Heart left ventricle (tissue), 16 donors: ENCODE measurements at regions of chr2 and their contacts with region 1.

Region 1: GRCh38 chr2:218186355-218186766 is 19.6 kb upstream of the CXCR1 start:
- DNase-seq: peak in 4 of 5 donors; percentile 46 to 66 (median 58)
- ATAC-seq: peak; percentile 80 to 94 (median 92)
- H3K4me3 ChIP-seq: peak overlapping the region in 1 of 12 donors; percentile 19
- H3K27ac ChIP-seq: peak overlapping the region in 1 of 12 donors; percentile 52
- H3K4me1 ChIP-seq: peaks cover 0 to 11% (median 2%) of the 10 kb centered on the region in 12 donors
- H3K27me3 ChIP-seq: no peaks in the 10 kb centered on the region
- CTCF ChIP-seq: peak; percentile 69 to 85 (median 80)
- POLR2A ChIP-seq: no peak

Region 2: DNA sequence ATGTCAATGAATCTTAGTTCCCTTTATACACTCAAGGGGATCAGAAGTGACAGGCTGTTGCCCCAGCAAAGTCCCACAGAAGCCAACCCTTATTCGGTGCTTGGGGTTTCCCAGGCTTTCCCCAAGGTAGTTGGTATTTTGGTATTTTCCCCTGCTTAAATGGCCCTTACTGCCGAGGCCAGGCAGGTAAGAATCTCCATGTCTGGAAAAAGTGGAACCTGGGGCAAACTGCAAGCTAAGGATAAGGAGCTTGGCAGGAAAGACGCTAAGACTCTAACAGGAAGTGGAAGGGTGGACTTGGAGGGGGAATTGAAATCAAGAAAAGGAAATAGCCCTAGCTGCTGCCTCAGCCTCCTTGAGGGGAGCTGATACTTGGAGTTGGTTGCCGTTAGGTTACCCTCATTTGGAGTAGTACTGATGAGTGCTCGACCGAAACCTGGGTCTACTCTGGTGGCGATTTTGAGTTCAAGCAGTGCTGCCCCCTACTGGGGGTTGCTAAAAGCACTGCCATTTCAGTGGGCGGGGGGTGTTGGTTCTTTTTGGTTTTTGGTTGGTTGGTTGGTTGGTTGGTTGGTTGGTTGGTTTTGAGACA is 71.1 kb after region 1 on chr2:
- intact Hi-C with region 1: loop called in 7 of 10 experiments (anchors 2 to 5 kb)
- DNase-seq: no peak
- ATAC-seq: peak in 1 of 4 donors; percentile 6
- H3K4me3 ChIP-seq: no peak overlapping the region
- H3K27ac ChIP-seq: peak overlapping the region in 7 of 12 donors; percentile 7 to 88 (median 49)
- H3K4me1 ChIP-seq: peaks cover 3 to 58% (median 45%) of the 10 kb centered on the region in 12 donors
- H3K27me3 ChIP-seq: no peaks in the 10 kb centered on the region
- CTCF ChIP-seq: peak; percentile 24 to 55 (median 38)
- POLR2A ChIP-seq: no peak

Region 3: DNA sequence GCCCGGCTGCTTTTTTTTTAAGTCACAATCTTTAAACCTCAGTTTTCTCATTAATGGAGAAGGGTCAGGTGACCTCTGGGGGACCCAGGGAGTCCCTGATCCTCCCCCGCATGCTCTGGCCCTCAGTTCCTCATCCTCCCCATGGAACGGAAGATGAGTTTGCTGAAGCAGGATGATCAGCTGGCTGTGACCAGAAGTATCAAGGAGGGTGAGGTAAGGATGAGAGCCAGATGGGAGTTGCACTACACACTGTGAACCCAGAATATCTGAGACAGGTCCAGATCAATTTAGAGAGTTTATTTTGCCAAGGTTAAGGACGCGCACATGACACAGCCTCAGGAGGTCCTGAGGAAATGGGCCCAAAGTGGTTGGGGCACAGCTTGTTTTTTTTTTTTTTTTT is 174.1 kb after region 1 on chr2:
- intact Hi-C with region 1: loop called in 6 of 10 experiments (anchors 5 to 10 kb)
- DNase-seq: peak in 1 of 5 donors; percentile 46
- ATAC-seq: peak in 3 of 4 donors; percentile 53 to 69 (median 58)
- H3K4me3 ChIP-seq: no peak overlapping the region
- H3K27ac ChIP-seq: peak overlapping the region in 1 of 12 donors; percentile 50
- H3K4me1 ChIP-seq: peaks cover 0 to 18% (median 0%) of the 10 kb centered on the region in 12 donors
- H3K27me3 ChIP-seq: no peaks in the 10 kb centered on the region
- CTCF ChIP-seq: no peak
- POLR2A ChIP-seq: no peak

Region 4: GRCh38 chr2:218367415-218368153 is 181.2 kb after region 1 on chr2:
- intact Hi-C with region 1: loop called in 1 of 10 experiments (anchors 10 kb)
- DNase-seq: peak; percentile 93 to 97 (median 94)
- ATAC-seq: peak; percentile 88 to 97 (median 96)
- H3K4me3 ChIP-seq: peak overlapping the region; percentile 12 to 72 (median 59)
- H3K27ac ChIP-seq: peak overlapping the region; percentile 75 to 98 (median 92)
- H3K4me1 ChIP-seq: peaks cover 0 to 48% (median 11%) of the 10 kb centered on the region in 12 donors
- H3K27me3 ChIP-seq: no peaks in the 10 kb centered on the region
- CTCF ChIP-seq: peak in 5 of 12 donors; percentile 9 to 32 (median 10)
- POLR2A ChIP-seq: peak; percentile 56 to 94

Region 5: DNA sequence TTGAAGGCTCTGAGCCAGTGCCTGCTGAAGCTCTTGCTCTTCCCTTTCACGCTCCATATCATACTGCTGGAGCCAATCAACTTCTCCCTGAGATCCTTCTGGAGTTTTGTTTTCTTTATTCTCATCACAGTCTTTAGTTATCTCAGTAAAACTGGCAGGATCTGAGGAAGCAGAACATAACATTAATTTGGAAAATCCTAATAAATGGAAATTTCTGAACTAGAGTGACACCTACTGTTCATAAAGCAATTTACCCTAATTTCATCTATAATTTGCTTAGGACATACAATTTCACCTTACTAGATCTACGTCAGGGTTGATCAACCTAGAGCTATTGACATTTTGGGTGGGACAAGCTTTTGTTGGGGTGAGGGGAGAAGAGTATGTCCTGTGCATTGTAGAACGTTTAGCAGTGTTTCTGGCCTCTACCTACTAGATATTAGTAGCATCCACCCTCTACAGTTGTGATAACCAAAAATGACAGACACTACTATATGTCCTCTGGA is 279.7 kb after region 1 on chr2:
- intact Hi-C with region 1: loop called in 3 of 10 experiments (anchors 10 kb)
- DNase-seq: no peak
- ATAC-seq: peak in 1 of 4 donors; percentile 26
- H3K4me3 ChIP-seq: no peak overlapping the region
- H3K27ac ChIP-seq: no peak overlapping the region
- H3K4me1 ChIP-seq: peaks cover 0 to 5% (median 1%) of the 10 kb centered on the region in 12 donors
- H3K27me3 ChIP-seq: no peaks in the 10 kb centered on the region
- CTCF ChIP-seq: peak; percentile 28 to 68 (median 50)
- POLR2A ChIP-seq: no peak

Region 6: GRCh38 chr2:218471982-218472381 is 285.6 kb after region 1 on chr2:
- intact Hi-C with region 1: loop called in 3 of 10 experiments (anchors 10 kb)
- DNase-seq: no peak
- ATAC-seq: peak in 2 of 4 donors; percentile 34 to 52
- H3K4me3 ChIP-seq: no peak overlapping the region
- H3K27ac ChIP-seq: peak overlapping the region in 1 of 12 donors; percentile 50
- H3K4me1 ChIP-seq: peaks cover 0 to 22% (median 0%) of the 10 kb centered on the region in 12 donors
- H3K27me3 ChIP-seq: no peaks in the 10 kb centered on the region
- CTCF ChIP-seq: no peak
- POLR2A ChIP-seq: no peak